ENCODE measurements at regions of chr1 and their contacts with region 1.

Region 1: GRCh38 chr1:159214149-159214760 is 9.6 kb downstream of the ACKR1 start:
- DNase-seq: peak; percentile 28
- ATAC-seq: peak; percentile 87
- H3K4me3 ChIP-seq: no peak overlapping the region
- H3K27ac ChIP-seq: no peak overlapping the region
- H3K4me1 ChIP-seq: no peaks in the 10 kb centered on the region
- H3K27me3 ChIP-seq: peaks cover 2% of the 10 kb centered on the region; the same call in 1 of the 2 replicates
- CTCF ChIP-seq: peak; percentile 74
- POLR2A ChIP-seq: no peak
- RAD21 ChIP-seq: peak; percentile 57

Region 2: GRCh38 chr1:158728510-158729225 is 485.6 kb before region 1 on chr1:
- CTCF ChIA-PET with region 1: no interaction called
- POLR2A ChIA-PET with region 1: no interaction called
- dilution Hi-C with region 1: no loop called
- in situ Hi-C with region 1: no loop called
- intact Hi-C with region 1: no loop called
- DNase-seq: no peak
- ATAC-seq: no peak
- H3K4me3 ChIP-seq: no peak overlapping the region
- H3K27ac ChIP-seq: no peak overlapping the region
- H3K4me1 ChIP-seq: no peaks in the 10 kb centered on the region
- H3K27me3 ChIP-seq: no peaks in the 10 kb centered on the region
- CTCF ChIP-seq: no peak
- POLR2A ChIP-seq: no peak
- RAD21 ChIP-seq: no peak

Region 3: GRCh38 chr1:158969855-158970254 is 244.4 kb before region 1 on chr1:
- CTCF ChIA-PET with region 1: no interaction called
- POLR2A ChIA-PET with region 1: no interaction called
- dilution Hi-C with region 1: no loop called
- in situ Hi-C with region 1: no loop called
- intact Hi-C with region 1: no loop called
- DNase-seq: no peak
- ATAC-seq: no peak
- H3K4me3 ChIP-seq: no peak overlapping the region
- H3K27ac ChIP-seq: no peak overlapping the region
- H3K4me1 ChIP-seq: no peaks in the 10 kb centered on the region
- H3K27me3 ChIP-seq: no peaks in the 10 kb centered on the region
- CTCF ChIP-seq: no peak
- POLR2A ChIP-seq: no peak
- RAD21 ChIP-seq: no peak

Region 4: GRCh38 chr1:158998781-158999161 is 215.5 kb before region 1 on chr1:
- CTCF ChIA-PET with region 1: no interaction called
- POLR2A ChIA-PET with region 1: no interaction called
- dilution Hi-C with region 1: no loop called
- in situ Hi-C with region 1: no loop called
- intact Hi-C with region 1: no loop called
- DNase-seq: peak; percentile 61
- ATAC-seq: peak; percentile 59
- H3K4me3 ChIP-seq: peak overlapping the region; percentile 61
- H3K27ac ChIP-seq: peak overlapping the region; percentile 36; the same call in 1 of the 2 replicates
- H3K4me1 ChIP-seq: no peaks in the 10 kb centered on the region
- H3K27me3 ChIP-seq: no peaks in the 10 kb centered on the region
- CTCF ChIP-seq: peak; percentile 90
- POLR2A ChIP-seq: no peak
- RAD21 ChIP-seq: peak; percentile 78

Region 5: GRCh38 chr1:159132271-159132881 is 81.9 kb before region 1 on chr1:
- CTCF ChIA-PET with region 1: interaction called, 4 read pairs
- POLR2A ChIA-PET with region 1: no interaction called
- dilution Hi-C with region 1: no loop called
- in situ Hi-C with region 1: no loop called
- intact Hi-C with region 1: loop called (anchors 1 kb)
- DNase-seq: peak; percentile 56
- ATAC-seq: peak; percentile 71
- H3K4me3 ChIP-seq: no peak overlapping the region
- H3K27ac ChIP-seq: no peak overlapping the region
- H3K4me1 ChIP-seq: no peaks in the 10 kb centered on the region
- H3K27me3 ChIP-seq: peaks cover 1% of the 10 kb centered on the region; the same call in 1 of the 2 replicates
- CTCF ChIP-seq: peak; percentile 92
- POLR2A ChIP-seq: no peak
- RAD21 ChIP-seq: peak; percentile 77

Region 6: DNA sequence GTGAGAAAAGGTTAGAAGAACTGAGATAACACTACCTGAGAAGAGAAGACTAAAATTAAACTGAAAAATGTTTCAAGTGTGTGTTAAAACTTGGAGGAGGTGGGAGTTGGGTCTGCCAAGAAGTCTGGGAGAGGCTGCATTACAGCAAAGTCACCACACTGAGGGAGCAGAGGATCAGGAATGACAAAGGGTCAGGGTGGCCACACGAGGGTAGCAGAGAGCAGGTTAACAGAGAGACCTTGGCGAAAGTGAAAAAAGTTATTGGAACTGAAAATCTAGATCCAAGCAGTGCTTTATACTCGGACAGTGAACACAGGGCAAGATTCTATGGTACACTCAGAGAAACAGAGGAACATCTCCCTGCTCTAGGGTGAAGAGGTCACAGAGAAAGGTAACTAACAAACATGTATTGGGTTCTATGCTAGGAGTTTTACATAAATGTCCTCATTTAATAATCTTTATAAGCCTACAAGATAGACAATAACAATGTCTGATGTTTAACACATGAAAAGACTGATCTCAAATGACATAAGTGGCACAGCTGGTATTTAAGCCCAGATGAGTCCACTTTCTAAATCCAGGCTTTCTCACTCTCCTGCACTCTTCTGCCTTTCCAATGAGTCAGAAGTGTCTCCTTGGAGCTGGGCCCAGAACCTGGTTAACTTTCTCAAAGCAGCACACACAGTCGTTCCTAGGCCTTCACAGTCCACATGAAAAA is 53.1 kb before region 1 on chr1:
- CTCF ChIA-PET with region 1: interaction called, 10 read pairs
- POLR2A ChIA-PET with region 1: no interaction called
- dilution Hi-C with region 1: no loop called
- in situ Hi-C with region 1: no loop called
- intact Hi-C with region 1: loop called (anchors 1 kb)
- DNase-seq: peak; percentile 86
- ATAC-seq: peak; percentile 100
- H3K4me3 ChIP-seq: no peak overlapping the region
- H3K27ac ChIP-seq: no peak overlapping the region
- H3K4me1 ChIP-seq: peaks cover 2% of the 10 kb centered on the region; the same call in 1 of the 2 replicates
- H3K27me3 ChIP-seq: no peaks in the 10 kb centered on the region
- CTCF ChIP-seq: peak; percentile 100
- POLR2A ChIP-seq: no peak
- RAD21 ChIP-seq: peak; percentile 95

Region 7: DNA sequence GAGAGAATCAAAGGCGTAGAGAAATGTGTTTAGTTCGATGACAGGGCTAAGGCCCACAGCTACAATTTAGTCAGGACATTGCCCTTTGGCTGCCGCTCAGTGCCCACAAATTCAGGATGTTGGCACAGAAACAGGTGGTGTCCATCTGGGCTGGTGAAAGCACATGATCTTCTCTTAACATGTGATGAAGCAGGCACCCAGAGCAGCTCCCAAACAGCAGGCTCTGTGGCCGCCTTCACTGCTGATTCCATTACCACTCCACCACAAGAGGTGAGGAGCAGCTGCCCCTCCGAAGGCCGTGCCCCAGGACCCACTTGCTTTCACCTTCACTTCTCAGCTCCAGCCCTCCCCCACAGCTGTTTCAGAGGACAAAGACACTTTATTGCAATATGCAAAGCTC is 15.2 kb after region 1 on chr1:
- CTCF ChIA-PET with region 1: interaction called, 13 read pairs
- POLR2A ChIA-PET with region 1: no interaction called
- dilution Hi-C with region 1: no loop called
- in situ Hi-C with region 1: no loop called
- intact Hi-C with region 1: no loop called
- DNase-seq: no peak
- ATAC-seq: no peak
- H3K4me3 ChIP-seq: no peak overlapping the region
- H3K27ac ChIP-seq: no peak overlapping the region
- H3K4me1 ChIP-seq: no peaks in the 10 kb centered on the region
- H3K27me3 ChIP-seq: no peaks in the 10 kb centered on the region
- CTCF ChIP-seq: no peak
- POLR2A ChIP-seq: no peak
- RAD21 ChIP-seq: no peak

Region 8: DNA sequence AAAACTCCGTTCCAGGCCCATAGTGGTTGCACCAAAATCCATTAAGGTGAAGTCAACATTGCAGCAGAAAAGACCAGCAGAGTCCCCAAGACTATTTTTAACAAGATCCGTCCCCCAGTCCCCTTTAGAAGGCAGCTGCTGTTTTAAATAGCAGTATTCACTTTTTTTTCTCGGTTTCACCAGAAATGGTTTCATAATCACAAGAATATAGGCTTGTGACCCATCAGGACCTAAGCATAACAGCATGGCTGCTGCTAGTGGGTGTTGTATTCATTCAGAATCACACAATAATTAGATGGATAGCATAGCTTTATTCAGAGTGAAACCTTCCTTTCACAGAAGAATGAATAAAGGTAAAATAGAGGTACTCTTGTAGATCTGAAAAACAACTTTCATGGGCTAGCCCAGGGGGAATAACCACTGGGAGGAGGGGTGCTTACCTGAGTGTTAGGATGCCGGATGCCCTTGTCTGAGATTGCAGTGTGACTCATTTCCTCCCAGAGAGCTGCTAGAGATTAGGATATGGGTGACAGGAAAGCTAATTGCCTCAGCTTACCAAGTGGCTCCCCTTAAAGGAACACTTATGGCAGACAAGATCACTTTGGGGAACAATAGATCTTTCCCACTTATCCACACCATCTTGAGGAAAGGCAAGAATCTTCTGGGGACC is 25.4 kb after region 1 on chr1:
- CTCF ChIA-PET with region 1: no interaction called
- POLR2A ChIA-PET with region 1: no interaction called
- dilution Hi-C with region 1: no loop called
- in situ Hi-C with region 1: no loop called
- intact Hi-C with region 1: no loop called
- DNase-seq: no peak
- ATAC-seq: no peak
- H3K4me3 ChIP-seq: no peak overlapping the region
- H3K27ac ChIP-seq: no peak overlapping the region
- H3K4me1 ChIP-seq: no peaks in the 10 kb centered on the region
- H3K27me3 ChIP-seq: no peaks in the 10 kb centered on the region
- CTCF ChIP-seq: no peak
- POLR2A ChIP-seq: no peak
- RAD21 ChIP-seq: no peak

Region 9: GRCh38 chr1:159798893-159799292 is 584.6 kb after region 1 on chr1:
- CTCF ChIA-PET with region 1: no interaction called
- POLR2A ChIA-PET with region 1: no interaction called
- dilution Hi-C with region 1: no loop called
- in situ Hi-C with region 1: no loop called
- intact Hi-C with region 1: loop called (anchors 10 kb)
- DNase-seq: peak; percentile 85
- ATAC-seq: peak; percentile 99
- H3K4me3 ChIP-seq: no peak overlapping the region
- H3K27ac ChIP-seq: no peak overlapping the region
- H3K4me1 ChIP-seq: no peaks in the 10 kb centered on the region
- H3K27me3 ChIP-seq: peaks cover 38% of the 10 kb centered on the region
- CTCF ChIP-seq: peak; percentile 82
- POLR2A ChIP-seq: no peak
- RAD21 ChIP-seq: peak; percentile 91

Region 10: GRCh38 chr1:160018900-160019299 is 804.6 kb after region 1 on chr1:
- CTCF ChIA-PET with region 1: interaction called, 4 read pairs
- POLR2A ChIA-PET with region 1: no interaction called
- dilution Hi-C with region 1: no loop called
- in situ Hi-C with region 1: no loop called
- intact Hi-C with region 1: loop called (anchors 10 kb)
- DNase-seq: peak; percentile 58
- ATAC-seq: peak; percentile 94
- H3K4me3 ChIP-seq: no peak overlapping the region
- H3K27ac ChIP-seq: no peak overlapping the region
- H3K4me1 ChIP-seq: peaks cover 6% of the 10 kb centered on the region
- H3K27me3 ChIP-seq: peaks cover 22% of the 10 kb centered on the region
- CTCF ChIP-seq: no peak
- POLR2A ChIP-seq: no peak
- RAD21 ChIP-seq: no peak